GM13977 (cell line): ENCODE measurements at regions of chr1 and their contacts with region 1.

Region 1: GRCh38 chr1:59296358-59297256 is at the start of gene FGGY:
- DNase-seq: peak; percentile 95
- CTCF ChIP-seq: no peak

Region 2: DNA sequence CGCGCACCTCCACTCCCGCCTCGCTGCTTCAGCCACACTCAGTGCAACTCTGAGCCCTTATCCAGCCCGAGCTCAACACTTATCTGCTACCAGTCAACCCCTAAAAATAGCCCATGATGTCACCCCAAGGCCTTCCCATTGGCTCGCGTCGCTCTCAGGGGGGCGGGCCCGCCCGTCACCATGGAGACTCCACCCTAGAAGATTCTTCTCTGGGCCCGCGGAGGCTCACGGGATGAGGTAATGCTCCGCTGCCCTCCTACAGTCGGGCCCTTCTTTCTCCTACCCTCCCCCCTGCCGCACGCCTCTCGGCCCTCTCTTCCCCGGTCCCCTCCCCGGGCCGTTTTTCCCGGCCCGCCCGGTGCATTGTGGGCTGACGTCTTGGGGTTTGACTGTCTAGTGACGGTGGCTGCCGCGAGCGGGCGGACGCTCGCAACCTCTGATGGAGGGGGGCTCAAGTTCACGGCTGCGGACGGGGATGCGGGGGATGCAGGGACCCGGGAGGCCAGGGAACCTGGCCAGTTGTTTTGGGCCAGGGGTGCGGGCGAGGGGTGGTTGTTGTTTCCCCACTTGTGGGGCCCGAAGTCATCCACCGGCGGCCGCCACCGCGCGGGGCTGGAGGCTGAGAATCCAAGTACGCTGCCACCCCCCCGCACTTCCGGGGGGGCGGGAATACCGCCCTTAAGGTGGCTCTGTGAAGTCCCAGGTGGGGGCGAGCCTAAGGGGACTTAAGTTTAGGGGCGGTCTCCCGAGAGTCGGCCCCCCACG is 512.4 kb before region 1 on chr1 and contains the start of gene JUN:
- in situ Hi-C with region 1: loop called (anchors 25 kb)
- DNase-seq: peak; percentile 99
- CTCF ChIP-seq: no peak

Region 3: DNA sequence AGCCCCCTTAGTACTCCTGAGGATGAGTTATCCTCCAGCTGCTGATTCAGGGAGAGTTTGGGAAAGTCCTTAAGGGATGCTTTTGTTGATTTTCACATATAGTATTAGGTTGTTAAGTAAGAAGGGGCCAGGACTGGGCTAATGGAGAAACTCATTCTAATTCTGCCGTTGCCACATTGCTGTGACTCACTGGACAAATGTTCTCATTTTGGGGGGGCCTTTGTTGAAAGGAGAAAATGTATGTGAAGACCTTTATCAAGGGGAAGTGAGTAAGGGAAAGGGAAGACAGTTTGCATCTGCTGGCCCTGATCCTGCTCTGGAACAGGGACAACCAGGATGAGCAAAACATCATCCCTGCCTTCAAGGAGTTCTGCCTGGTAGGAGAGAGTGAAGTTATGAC is 122.9 kb before region 1 on chr1:
- in situ Hi-C with region 1: no loop called
- DNase-seq: no peak
- CTCF ChIP-seq: no peak

Region 4: DNA sequence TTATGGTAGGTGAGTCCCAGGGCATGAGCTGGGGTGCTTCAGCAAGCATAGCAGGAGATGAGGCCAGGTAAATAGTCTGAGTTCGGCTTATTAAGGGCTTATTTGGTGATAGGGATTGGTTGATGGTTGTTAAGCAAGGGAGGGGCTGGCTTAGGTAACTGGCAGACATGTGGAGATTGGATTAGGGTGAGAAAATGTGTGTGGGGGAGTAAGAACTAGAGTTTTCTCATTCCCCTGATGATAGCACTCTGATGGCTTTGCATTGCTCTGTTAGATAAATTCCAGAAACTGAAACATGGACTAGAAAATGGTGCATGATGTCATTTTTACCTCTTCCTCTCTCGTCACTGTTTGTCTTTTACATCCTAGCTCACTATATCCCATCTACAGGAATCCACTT is 53.9 kb after region 1 on chr1:
- in situ Hi-C with region 1: no loop called
- DNase-seq: no peak
- CTCF ChIP-seq: no peak